Activated CD4-positive, alpha-beta memory T cell treated with anti-CD3 and anti-CD28 coated beads, Interleukin-2, amount 10 ng/mL, durations not matched to agents 7 days and 5 days (primary cell): ENCODE measurements at regions of chr22 and their contacts with region 1.

Region 1: DNA sequence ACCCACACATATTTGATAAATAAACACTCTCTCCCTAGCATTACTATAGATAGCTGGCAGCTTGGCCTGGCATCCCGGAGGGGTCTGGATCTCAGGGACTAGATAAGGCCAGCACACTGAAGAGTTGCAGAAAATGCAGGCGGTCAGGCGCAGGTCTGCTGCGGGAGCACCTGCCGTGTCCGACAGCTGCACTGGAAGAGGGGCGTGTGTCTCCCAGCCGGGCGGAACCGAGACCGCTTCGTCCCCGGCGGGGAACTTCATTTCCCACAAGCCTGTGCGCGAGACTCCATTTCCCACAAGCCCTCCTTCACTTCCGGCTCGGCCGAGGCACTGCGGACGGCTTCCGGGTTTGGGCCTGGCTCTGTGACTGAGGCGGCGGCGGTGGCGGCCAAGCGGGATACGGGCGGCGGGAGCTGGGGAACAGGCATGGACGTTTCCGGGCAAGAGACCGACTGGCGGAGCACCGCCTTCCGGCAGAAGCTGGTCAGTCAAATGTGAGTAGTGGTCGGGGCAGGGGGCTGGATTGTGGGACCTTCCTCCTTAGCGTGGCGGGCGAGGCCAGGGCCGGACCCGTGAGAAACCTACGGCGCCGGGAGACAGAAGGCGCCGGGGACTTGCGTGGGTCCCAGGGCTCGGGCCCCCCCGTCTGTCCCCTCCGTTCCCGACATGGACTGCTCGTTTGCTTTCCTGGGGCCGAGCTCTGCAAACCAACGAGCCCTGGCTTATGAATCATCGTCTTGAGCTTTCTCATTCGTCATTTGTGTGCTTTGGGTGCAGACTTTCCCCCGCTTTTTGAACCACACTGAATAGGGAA is at the start of gene MED15:
- DNase-seq: peak; percentile 93
- H3K4me3 Mint-ChIP-seq: peak within 1 kb of the TSS; percentile 93
- H3K27ac Mint-ChIP-seq: peak within 1 kb of the TSS; percentile 94
- H3K4me1 Mint-ChIP-seq: peaks cover 48% of the 10 kb centered on the region
- H3K27me3 Mint-ChIP-seq: no peaks in the 10 kb centered on the region
- total RNA-seq, gene MED15: 168 TPM

Region 2: DNA sequence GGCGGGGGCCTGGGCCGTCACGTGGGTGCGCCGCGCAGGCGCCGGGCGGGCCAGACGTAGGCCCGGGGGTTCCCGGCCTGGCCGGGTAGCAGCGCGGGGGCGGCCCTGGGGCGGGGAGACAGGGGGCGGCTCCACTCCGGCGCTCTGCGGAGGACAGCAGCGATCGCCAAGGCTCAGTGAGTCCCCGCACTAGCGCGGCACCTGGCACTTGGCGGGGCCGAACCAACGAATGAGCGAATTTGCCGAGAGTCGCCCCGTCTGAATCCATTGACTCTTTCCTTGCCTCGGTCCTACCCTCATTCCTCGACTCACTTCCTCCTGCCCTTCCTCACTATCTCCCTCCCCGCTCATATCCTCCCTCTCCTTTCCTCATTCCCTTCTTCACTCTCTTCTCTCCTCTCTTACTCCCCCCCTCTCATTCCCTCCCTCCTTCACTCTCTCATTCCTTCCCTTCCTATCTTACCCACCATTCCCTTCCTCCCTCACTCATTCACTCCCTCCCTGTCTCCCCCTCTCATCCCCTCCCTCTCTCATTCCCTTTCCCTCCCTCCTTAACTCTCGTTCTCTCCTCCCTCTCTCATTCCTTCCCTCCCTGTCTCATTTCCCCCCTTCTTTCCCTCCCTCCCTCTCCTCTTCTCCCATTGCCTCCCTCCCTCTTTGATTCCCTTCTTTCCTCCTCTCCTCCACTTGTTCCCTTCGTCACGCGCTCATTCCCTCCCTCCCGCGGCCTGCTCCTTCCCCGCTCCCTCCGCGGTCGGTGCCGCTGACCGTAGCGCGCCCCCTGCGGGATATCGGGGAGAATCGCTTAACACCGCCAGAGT is 11.4 kb before region 1 on chr22:
- CTCF ChIA-PET with region 1: no interaction called
- POLR2A ChIA-PET with region 1: interaction called, 27 read pairs
- DNase-seq: peak; percentile 92
- H3K4me3 Mint-ChIP-seq: peak overlapping the region; percentile 88
- H3K27ac Mint-ChIP-seq: peak overlapping the region; percentile 58
- H3K4me1 Mint-ChIP-seq: peaks cover 34% of the 10 kb centered on the region
- H3K27me3 Mint-ChIP-seq: no peaks in the 10 kb centered on the region

Region 3: DNA sequence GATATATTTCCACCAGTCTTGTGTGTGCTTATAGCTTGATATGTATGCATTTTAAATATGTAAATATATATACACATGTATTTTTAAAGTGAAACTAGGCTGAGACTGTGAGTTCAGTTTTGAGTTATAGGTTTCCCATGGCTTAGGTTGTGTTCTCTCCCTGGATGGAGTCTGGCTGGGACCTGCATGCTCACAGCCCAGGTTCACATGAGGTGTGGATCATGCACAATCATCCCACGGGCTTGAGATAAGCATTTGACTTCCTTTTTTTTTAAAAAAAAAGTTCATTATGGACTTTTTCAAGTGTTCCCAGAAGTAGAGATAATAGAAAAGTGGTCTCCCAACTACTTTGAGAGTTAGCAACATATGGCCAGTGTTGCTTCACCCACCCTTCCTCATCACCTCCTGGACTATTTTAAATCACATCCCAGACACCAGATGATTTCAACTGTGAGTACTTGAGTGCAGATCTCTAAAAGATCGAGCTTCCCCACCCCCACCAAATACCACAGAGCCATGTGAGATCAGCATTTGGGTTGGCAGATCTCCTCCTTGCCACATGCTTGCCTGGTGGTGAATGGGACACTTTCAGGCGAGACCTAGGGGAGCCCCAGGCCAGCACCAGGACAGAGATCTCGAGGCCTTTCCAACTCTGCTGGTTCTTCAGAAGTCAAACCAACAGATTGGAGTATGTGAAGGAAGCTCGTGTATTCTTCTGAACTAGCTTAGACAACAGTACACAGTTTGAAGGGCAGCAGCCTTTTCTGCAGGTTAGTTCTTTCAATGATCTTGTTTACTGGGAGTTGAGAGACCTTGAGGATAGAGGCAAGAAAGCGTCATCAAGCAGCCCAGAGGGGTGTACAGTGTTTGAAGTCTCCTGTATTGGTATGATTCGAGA is 15.9 kb after region 1 on chr22:
- CTCF ChIA-PET with region 1: interaction called, 4 read pairs
- POLR2A ChIA-PET with region 1: interaction called, 19 read pairs
- DNase-seq: peak; percentile 36
- H3K4me3 Mint-ChIP-seq: no peak overlapping the region
- H3K27ac Mint-ChIP-seq: peak overlapping the region; percentile 63
- H3K4me1 Mint-ChIP-seq: peaks cover 64% of the 10 kb centered on the region
- H3K27me3 Mint-ChIP-seq: no peaks in the 10 kb centered on the region

Region 4: GRCh38 chr22:20568989-20569769 is 61.7 kb after region 1 on chr22:
- CTCF ChIA-PET with region 1: interaction called, 30 read pairs
- POLR2A ChIA-PET with region 1: interaction called, 396 read pairs
- DNase-seq: peak; percentile 92
- H3K4me3 Mint-ChIP-seq: peak overlapping the region; percentile 54
- H3K27ac Mint-ChIP-seq: peak overlapping the region; percentile 96
- H3K4me1 Mint-ChIP-seq: peaks cover 86% of the 10 kb centered on the region
- H3K27me3 Mint-ChIP-seq: no peaks in the 10 kb centered on the region